MCF 10A (cell line): ENCODE measurements at regions of chr5 and their contacts with region 1.

Region 1: DNA sequence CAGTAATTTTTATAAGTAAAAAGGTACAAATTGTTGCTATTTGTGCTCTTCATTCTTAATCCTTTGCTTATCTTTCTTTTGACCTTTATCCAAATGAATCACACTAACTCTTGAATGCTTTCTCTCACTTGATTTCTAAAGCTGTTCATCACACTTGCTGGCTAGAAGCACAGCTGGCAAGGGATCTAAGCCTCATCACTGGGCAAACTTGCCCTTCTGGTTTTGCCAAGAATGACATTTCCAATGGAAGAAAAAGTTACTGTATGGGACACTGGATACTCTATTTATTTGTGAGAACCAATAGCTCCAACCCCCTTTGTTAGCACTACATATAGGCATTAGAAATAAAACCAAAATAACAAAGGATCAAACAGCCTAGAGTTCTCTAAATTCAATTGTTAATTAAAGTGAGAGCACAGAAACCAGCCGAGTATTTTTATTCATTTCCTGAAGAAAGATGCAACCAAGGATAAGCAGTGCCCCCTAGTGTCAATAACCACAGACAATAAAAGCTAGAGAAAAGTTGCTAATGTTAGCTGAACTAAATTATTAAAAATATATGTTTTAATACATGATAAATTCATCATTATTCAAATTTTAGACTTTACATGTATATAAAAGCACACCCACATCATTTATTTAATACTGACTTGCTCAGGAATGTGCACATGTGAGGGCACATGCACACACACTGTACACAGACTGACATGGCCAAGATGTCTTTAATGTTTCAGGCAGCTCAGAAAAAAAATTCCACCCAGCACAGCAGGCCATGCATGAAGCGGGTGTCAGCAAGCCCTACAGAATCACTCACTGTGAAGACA is 59.8 kb upstream of the POU5F2 start:
- DNase-seq: peak; percentile 69
- H3K4me3 Mint-ChIP-seq: no peak overlapping the region
- H3K27ac Mint-ChIP-seq: no peak overlapping the region
- H3K4me1 Mint-ChIP-seq: peaks cover 5% of the 10 kb centered on the region
- H3K27me3 Mint-ChIP-seq: no peaks in the 10 kb centered on the region
- CTCF ChIP-seq: peak; percentile 80

Region 2: GRCh38 chr5:91928754-91929521 is 1872.3 kb before region 1 on chr5:
- CTCF ChIA-PET with region 1: interaction called, 7 read pairs
- POLR2A ChIA-PET with region 1: no interaction called
- intact Hi-C with region 1: loop called (anchors 10 kb)
- DNase-seq: peak; percentile 11
- H3K4me3 Mint-ChIP-seq: no peak overlapping the region
- H3K27ac Mint-ChIP-seq: no peak overlapping the region
- H3K4me1 Mint-ChIP-seq: no peaks in the 10 kb centered on the region
- H3K27me3 Mint-ChIP-seq: peaks cover 52% of the 10 kb centered on the region
- CTCF ChIP-seq: peak; percentile 31

Region 3: DNA sequence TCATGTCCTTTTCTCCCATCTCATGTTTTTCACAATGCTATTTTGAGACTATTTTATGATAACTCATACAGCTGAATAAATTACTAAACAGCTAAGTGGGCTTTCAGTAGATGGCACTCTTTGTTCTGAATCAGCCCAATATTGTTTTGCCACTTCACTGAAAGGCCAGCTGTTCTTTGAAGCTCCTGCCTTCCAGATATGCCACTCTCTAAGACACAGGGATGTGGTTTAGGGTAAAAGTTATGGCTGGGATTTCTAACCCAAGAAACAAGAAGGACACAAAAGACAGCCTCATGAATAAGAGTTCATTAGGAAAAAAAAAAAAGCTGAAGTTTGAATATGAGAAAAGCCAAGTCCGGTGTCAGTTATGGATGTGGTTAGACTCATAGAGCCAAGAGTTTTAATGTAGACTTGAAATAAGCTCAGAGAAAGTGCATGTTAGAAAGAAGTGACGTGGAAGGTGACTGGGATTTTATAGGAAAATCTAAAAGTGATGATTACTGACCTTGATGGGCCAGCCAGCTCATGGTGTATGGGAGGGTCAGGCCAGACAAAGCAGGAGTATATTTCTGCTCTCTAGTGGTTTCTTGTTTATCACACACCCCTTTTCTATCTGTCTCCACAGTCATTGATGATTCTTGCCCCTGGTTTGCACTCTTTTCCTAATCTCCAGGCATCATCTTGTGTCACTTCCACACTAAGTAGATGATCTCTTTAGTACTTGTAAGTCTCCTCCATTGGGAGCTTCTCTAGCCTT is 708.7 kb before region 1 on chr5:
- CTCF ChIA-PET with region 1: interaction called, 6 read pairs
- POLR2A ChIA-PET with region 1: no interaction called
- intact Hi-C with region 1: loop called (anchors 2 kb)
- DNase-seq: peak; percentile 40
- H3K4me3 Mint-ChIP-seq: no peak overlapping the region
- H3K27ac Mint-ChIP-seq: no peak overlapping the region
- H3K4me1 Mint-ChIP-seq: no peaks in the 10 kb centered on the region
- H3K27me3 Mint-ChIP-seq: no peaks in the 10 kb centered on the region
- CTCF ChIP-seq: peak; percentile 35

Region 4: GRCh38 chr5:93279296-93279963 is 521.8 kb before region 1 on chr5:
- CTCF ChIA-PET with region 1: no interaction called
- POLR2A ChIA-PET with region 1: no interaction called
- intact Hi-C with region 1: no loop called
- DNase-seq: no peak
- H3K4me3 Mint-ChIP-seq: no peak overlapping the region
- H3K27ac Mint-ChIP-seq: no peak overlapping the region
- H3K4me1 Mint-ChIP-seq: peaks cover 2% of the 10 kb centered on the region
- H3K27me3 Mint-ChIP-seq: no peaks in the 10 kb centered on the region
- CTCF ChIP-seq: no peak

Region 5: GRCh38 chr5:93620487-93621326 is 180.5 kb before region 1 on chr5:
- CTCF ChIA-PET with region 1: interaction called, 23 read pairs
- POLR2A ChIA-PET with region 1: no interaction called
- intact Hi-C with region 1: no loop called
- DNase-seq: peak; percentile 72
- H3K4me3 Mint-ChIP-seq: peak overlapping the region; percentile 89
- H3K27ac Mint-ChIP-seq: peak overlapping the region; percentile 76
- H3K4me1 Mint-ChIP-seq: peaks cover 6% of the 10 kb centered on the region
- H3K27me3 Mint-ChIP-seq: no peaks in the 10 kb centered on the region
- CTCF ChIP-seq: no peak

Region 6: GRCh38 chr5:93704996-93705395 is 96.2 kb before region 1 on chr5:
- CTCF ChIA-PET with region 1: no interaction called
- POLR2A ChIA-PET with region 1: no interaction called
- intact Hi-C with region 1: no loop called
- DNase-seq: no peak
- H3K4me3 Mint-ChIP-seq: no peak overlapping the region
- H3K27ac Mint-ChIP-seq: no peak overlapping the region
- H3K4me1 Mint-ChIP-seq: no peaks in the 10 kb centered on the region
- H3K27me3 Mint-ChIP-seq: no peaks in the 10 kb centered on the region
- CTCF ChIP-seq: no peak

Region 7: DNA sequence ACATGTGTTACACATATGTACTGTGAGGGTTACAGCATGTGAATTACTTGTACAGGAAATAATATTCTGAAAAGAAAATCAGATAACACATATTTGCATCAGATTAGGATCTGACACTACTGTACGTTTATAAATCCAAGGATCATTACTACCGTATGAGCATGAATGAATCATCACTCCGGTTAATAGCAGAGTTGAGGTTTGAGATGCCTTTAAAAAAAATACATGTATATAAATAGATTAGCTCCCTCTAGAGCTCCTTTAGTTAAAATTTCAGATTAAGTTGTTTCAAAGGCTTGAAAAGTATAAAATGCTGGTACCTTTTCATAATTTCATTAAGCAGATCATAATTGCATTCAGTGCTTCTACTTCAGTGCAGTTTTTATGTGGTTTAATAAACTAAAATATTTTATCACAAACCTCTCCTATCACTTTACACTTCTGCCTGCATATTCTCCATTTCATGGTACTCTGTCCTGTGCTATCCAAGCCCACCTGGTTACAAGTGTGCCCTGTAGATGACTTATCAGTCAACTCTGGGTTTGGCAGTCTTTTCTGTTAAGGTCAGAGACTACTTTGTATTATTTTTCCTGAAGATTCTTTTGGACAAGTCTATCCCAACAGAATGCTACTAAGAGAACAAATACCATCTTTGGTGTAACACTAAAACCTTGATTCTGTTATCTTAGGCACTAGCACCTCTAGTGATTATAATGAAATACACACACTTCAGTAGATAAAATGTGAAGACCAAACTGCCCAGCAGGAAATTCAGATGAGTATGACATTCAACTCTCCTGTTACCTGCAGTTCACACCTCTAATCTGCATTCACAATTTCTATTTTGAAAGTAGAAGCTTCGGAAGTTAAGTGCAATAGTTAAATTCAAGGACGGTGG is 11.8 kb before region 1 on chr5:
- CTCF ChIA-PET with region 1: interaction called, 30 read pairs
- POLR2A ChIA-PET with region 1: no interaction called
- intact Hi-C with region 1: no loop called
- DNase-seq: peak; percentile 43
- H3K4me3 Mint-ChIP-seq: no peak overlapping the region
- H3K27ac Mint-ChIP-seq: no peak overlapping the region
- H3K4me1 Mint-ChIP-seq: peaks cover 5% of the 10 kb centered on the region
- H3K27me3 Mint-ChIP-seq: no peaks in the 10 kb centered on the region
- CTCF ChIP-seq: no peak

Region 8: DNA sequence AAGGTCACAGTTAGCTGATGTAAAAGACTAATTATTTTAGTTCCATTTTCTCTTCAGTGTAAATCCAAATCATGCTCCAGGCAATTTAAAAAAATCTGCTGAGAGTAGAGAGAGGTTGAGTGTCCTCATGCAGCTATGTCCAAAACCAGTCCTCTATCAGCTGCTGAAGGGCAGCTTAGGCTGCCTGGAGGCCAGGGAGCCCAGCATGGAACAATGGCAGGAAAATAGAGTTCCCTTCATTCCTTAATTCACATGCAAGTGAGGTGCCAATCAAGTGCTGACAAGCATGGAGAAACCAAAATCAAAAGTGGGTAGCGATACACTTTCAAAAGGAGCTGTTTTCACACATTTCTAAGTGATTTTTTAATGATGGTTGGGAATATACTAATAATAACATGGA is 18.5 kb after region 1 on chr5:
- CTCF ChIA-PET with region 1: interaction called, 12 read pairs
- POLR2A ChIA-PET with region 1: no interaction called
- intact Hi-C with region 1: no loop called
- DNase-seq: no peak
- H3K4me3 Mint-ChIP-seq: no peak overlapping the region
- H3K27ac Mint-ChIP-seq: no peak overlapping the region
- H3K4me1 Mint-ChIP-seq: no peaks in the 10 kb centered on the region
- H3K27me3 Mint-ChIP-seq: no peaks in the 10 kb centered on the region
- CTCF ChIP-seq: no peak